ENCODE measurements at regions of chr2 and their contacts with region 1.

Region 1: GRCh38 chr2:38581193-38582147 is 21.3 kb downstream of the HNRNPLL start:
- DNase-seq: peak; percentile 62
- ATAC-seq: peak; percentile 72

Region 2: DNA sequence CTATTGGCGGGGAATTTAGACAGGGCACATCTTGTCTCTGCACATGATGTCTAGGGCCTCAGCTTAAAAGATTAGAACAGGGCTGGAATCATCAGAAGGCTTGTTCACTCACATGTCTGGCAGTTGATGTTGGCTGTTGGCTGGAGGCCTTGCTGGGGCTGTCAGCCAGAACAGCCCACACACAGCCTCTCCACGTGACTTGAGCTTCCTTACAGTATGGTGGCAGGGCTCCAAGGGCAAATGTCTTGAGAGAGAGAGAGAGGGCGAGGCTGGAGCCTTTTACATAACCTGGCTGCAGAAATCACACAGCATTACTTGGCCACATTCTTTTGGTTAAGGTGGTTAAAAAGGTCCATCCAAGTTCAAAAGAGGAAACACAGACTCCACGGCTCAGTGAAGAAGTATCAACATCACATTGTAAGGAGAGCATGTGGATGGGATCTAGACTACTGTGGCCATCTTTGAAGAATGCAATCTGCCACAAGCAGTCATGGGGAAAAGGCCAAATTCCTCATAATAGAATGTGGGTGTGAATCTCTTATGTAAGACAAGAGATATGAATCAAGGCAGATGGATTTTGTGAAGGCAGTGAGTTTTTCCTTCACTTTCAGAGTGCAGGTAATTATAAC is 139.3 kb after region 1 on chr2:
- intact Hi-C with region 1: loop called (anchors 2 kb)
- DNase-seq: peak; percentile 85
- ATAC-seq: peak; percentile 83

Measured in Right ventricle myocardium inferior (tissue), 1 donor.